Vagina (tissue), 2 donors: ENCODE measurements at regions of chr17 and their contacts with region 1.

Region 1: DNA sequence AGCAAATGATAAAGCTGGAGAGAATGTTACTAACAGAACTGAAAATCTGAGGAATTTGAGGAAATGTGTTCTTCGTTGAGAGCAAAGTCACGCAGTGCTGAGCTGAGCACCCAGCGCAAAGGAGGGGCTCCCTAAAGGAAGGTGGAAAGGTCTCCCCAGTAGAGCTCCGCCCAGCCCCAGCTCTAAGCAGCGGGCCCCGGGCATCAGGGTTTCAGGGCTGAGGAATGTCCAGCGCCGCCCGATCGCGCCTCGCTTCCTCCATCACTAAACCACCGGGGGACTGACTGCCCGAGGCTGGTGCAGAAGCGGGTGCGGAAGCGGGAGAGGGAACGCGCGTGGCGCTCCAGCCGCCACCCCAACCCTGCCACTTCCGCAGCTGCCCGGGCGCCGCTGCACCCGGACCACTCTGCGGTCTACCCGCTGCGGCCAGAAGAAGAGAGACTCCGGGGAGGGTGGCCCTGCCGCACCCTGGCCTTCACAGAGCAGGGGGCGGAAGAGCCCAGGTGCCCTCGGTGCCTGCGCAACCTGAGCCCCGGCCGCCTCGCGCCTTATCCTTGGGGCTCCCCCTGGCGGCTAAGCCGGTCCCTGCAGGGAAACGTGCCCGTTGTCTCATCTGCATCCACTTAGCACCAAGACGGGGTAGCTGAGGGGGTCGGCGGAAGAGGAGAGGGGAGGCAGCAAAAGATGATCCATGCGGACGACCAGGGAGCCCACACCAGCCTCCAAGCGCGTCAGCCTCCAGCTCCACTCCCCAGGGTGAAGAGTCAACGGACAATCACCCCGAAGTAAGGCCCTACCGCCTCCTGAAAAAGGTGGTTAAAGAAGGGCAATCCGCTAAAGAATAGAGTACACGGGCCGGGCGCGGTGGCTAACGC is 12.4 kb upstream of the GUCY2D start:
- DNase-seq: no peak
- H3K4me3 ChIP-seq: peak overlapping the region; percentile 54 to 56
- H3K27ac ChIP-seq: peak overlapping the region; percentile 60
- H3K4me1 ChIP-seq: peaks cover 10% of the 10 kb centered on the region
- H3K27me3 ChIP-seq: no peaks in the 10 kb centered on the region
- CTCF ChIP-seq: peak; percentile 90 to 98 (median 93)
- POLR2A ChIP-seq: no peak

Region 2: GRCh38 chr17:7561028-7561575 is 428.9 kb before region 1 on chr17:
- intact Hi-C with region 1: no loop called
- DNase-seq: peak in 1 of 2 donors; percentile 92
- H3K4me3 ChIP-seq: peak overlapping the region; percentile 70 to 82
- H3K27ac ChIP-seq: peak overlapping the region; percentile 88
- H3K4me1 ChIP-seq: peaks cover 70% of the 10 kb centered on the region
- H3K27me3 ChIP-seq: no peaks in the 10 kb centered on the region
- CTCF ChIP-seq: peak; percentile 64 to 90 (median 89)
- POLR2A ChIP-seq: no peak

Region 3: GRCh38 chr17:7823581-7824397 is 166.2 kb before region 1 on chr17:
- intact Hi-C with region 1: loop called (anchors 5 kb)
- DNase-seq: no peak
- H3K4me3 ChIP-seq: no peak overlapping the region
- H3K27ac ChIP-seq: no peak overlapping the region
- H3K4me1 ChIP-seq: no peaks in the 10 kb centered on the region
- H3K27me3 ChIP-seq: no peaks in the 10 kb centered on the region
- CTCF ChIP-seq: no peak
- POLR2A ChIP-seq: no peak

Region 4: GRCh38 chr17:7862692-7863437 is 127.2 kb before region 1 on chr17:
- intact Hi-C with region 1: loop called (anchors 5 kb)
- DNase-seq: peak; percentile 14 to 82
- H3K4me3 ChIP-seq: no peak overlapping the region
- H3K27ac ChIP-seq: no peak overlapping the region
- H3K4me1 ChIP-seq: peaks cover 25% of the 10 kb centered on the region
- H3K27me3 ChIP-seq: no peaks in the 10 kb centered on the region
- CTCF ChIP-seq: peak in 2 of 3 experiments; percentile 74 to 87
- POLR2A ChIP-seq: no peak